ENCODE measurements at regions of chr1 and their contacts with region 1.

Region 1: DNA sequence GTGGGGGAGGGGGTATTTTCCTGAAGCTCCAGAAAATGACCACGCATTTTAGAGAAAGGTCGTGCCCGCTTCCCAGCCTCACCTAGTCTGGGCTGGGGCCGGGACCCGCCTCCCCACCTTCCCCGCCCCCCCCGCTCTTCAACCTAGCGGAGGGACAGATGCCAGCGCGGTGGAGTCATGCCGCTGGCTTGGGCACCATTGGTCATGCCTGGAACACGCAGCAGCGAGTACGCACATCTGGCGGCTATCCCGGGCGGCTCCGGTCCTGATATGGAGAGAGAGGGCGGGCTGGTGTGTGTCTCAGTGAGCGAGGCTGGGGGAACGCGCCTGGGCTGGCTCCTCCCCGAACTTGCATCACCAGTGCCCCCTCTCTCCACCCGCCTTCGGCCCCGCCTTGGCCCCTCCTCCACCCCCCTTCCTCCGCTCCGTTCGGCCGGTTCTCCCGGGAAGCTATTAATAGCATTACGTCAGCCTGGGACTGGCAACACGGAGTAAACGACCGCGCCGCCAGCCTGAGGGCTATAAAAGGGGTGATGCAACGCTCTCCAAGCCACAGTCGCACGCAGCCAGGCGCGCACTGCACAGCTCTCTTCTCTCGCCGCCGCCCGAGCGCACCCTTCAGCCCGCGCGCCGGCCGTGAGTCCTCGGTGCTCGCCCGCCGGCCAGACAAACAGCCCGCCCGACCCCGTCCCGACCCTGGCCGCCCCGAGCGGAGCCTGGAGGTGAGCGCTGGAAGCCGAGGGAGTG is at the start of gene ATF3:
- DNase-seq: peak; percentile 27 to 90 (median 47)
- ATAC-seq: peak; percentile 87
- H3K4me3 ChIP-seq: peak within 1 kb of the TSS; percentile 70
- H3K4me3 Mint-ChIP-seq: peak within 1 kb of the TSS; percentile 90 to 98 (median 95)
- H3K27ac ChIP-seq: no peak within 1 kb of the TSS
- H3K27ac Mint-ChIP-seq: peak within 1 kb of the TSS; percentile 40 to 98 (median 76)
- H3K4me1 ChIP-seq: peaks cover 17 to 23% of the 10 kb centered on the region in 2 donors
- H3K4me1 Mint-ChIP-seq: peaks cover 17 to 55% (median 21%) of the 10 kb centered on the region in 7 donors
- H3K27me3 ChIP-seq: peaks cover 17 to 26% of the 10 kb centered on the region in 2 donors
- H3K27me3 Mint-ChIP-seq: peaks cover 47 to 66% (median 58%) of the 10 kb centered on the region in 5 donors
- total RNA-seq, gene ATF3: 0.57 to 83.4 (median 12.5) TPM

Region 2: GRCh38 chr1:212545941-212546635 is 62.3 kb before region 1 on chr1:
- CTCF ChIA-PET with region 1: no interaction called
- POLR2A ChIA-PET with region 1: no interaction called
- intact Hi-C with region 1: no loop called
- DNase-seq: no peak
- ATAC-seq: peak; percentile 50
- H3K4me3 ChIP-seq: no peak overlapping the region
- H3K4me3 Mint-ChIP-seq: no peak overlapping the region
- H3K27ac ChIP-seq: no peak overlapping the region
- H3K27ac Mint-ChIP-seq: no peak overlapping the region
- H3K4me1 ChIP-seq: no peaks in the 10 kb centered on the region
- H3K4me1 Mint-ChIP-seq: peaks cover 0 to 2% (median 0%) of the 10 kb centered on the region in 7 donors
- H3K27me3 ChIP-seq: no peaks in the 10 kb centered on the region
- H3K27me3 Mint-ChIP-seq: peaks cover 7 to 55% (median 18%) of the 10 kb centered on the region in 5 donors

Region 3: DNA sequence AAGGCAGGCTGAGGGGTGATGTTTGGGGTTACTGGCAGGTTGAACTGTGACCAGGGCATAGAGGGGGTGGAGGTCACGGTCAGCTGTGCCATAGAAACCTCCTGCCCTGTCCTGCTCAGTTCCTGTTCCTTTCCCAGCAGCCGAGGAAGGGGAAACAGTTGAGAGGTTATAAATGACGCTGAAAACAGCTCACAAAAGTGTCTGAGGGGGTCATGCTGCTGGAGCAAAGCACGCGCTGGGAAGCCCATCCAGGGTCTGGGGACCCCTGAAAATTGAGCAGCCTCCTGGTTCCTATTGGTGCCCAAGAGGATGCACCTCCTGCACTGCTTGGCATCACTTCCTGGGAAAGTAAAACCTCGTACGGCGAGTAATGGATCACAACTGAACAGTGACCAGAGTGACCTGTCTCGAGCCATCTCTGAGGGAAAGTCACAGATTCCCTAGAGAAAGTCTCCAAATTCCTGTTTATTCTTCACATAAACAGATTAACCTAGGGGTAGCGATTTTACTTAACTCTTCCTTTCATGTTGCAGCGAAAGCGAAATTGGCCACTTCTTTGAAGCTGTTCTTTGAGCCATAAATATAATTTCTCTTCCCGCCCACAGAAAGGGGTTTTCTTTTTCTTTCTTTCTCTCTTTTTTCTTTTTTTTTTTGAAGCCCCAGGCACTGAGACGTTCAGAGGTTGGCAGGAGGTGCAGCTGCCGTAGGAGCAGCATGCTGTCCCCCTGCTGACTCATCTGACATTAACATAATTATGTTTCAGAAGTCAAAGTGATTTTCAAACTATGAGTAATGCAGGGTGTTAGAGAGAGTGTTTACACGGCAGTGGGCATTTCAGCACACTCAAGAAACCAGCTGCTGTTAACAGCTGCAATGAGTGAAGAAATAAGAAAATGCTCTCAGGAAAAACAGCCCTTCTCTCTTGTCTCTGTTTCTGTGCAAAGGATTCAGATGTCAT is 41.6 kb before region 1 on chr1:
- CTCF ChIA-PET with region 1: no interaction called
- POLR2A ChIA-PET with region 1: no interaction called
- intact Hi-C with region 1: loop called (anchors 1 kb)
- DNase-seq: peak in 7 of 9 donors; percentile 23 to 66 (median 30)
- ATAC-seq: peak; percentile 96
- H3K4me3 ChIP-seq: peak overlapping the region; percentile 78
- H3K4me3 Mint-ChIP-seq: peak overlapping the region; percentile 80 to 98 (median 88)
- H3K27ac ChIP-seq: peak overlapping the region; percentile 31
- H3K27ac Mint-ChIP-seq: peak overlapping the region; percentile 62 to 90 (median 77)
- H3K4me1 ChIP-seq: peaks cover 0 to 6% of the 10 kb centered on the region in 2 donors
- H3K4me1 Mint-ChIP-seq: peaks cover 9 to 27% (median 15%) of the 10 kb centered on the region in 7 donors
- H3K27me3 ChIP-seq: no peaks in the 10 kb centered on the region
- H3K27me3 Mint-ChIP-seq: peaks cover 0 to 43% (median 0%) of the 10 kb centered on the region in 5 donors

Region 4: DNA sequence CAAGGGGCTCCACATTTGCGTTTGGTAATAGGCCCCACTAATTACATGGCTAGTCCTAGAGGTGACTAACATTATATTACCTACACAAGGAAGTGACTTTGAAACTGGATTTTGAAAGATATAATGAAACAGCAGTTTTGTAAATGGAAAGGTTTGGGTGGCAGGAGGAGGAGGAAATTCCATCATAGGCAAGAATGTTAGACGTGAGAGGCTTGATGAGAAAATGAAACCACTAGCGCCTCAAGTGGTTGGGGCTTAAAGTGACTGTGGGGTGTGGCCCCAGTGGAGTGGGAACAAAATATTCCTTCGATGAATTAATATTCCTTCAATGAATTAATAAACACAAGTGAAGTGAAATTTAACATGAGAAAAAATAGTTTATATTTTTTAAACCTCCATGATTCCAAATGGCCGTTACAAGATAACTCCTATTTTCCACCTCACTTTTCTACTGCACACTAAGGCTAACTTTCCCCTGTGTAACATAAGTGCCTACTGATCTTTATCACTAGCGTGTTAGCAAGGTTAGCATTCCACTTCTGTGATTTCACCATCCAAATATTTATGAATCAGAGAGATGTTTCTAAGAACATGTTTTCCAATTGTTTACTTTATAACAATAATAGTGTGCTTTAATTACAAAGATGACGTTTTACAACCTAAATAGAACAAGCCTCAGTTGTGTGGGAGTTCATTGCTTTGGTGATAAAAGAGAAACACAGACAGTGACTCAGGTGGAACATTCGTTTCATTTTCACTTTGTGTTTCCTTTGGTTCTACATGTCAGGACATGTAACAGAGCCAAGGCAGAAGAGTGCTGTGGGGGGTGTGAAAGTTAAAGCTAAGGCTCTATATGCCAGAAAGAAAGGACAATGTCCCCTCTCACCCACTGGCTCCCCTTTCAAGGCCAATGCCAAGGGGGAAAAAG is 12.3 kb before region 1 on chr1:
- CTCF ChIA-PET with region 1: no interaction called
- POLR2A ChIA-PET with region 1: no interaction called
- intact Hi-C with region 1: loop called (anchors 1 kb)
- DNase-seq: peak in 7 of 9 donors; percentile 28 to 78 (median 50)
- ATAC-seq: peak; percentile 94
- H3K4me3 ChIP-seq: peak overlapping the region; percentile 14
- H3K4me3 Mint-ChIP-seq: peak overlapping the region; percentile 4 to 84 (median 72)
- H3K27ac ChIP-seq: no peak overlapping the region
- H3K27ac Mint-ChIP-seq: peak overlapping the region; percentile 19 to 99 (median 79)
- H3K4me1 ChIP-seq: peaks cover 8 to 11% of the 10 kb centered on the region in 2 donors
- H3K4me1 Mint-ChIP-seq: peaks cover 0 to 27% (median 14%) of the 10 kb centered on the region in 7 donors
- H3K27me3 ChIP-seq: no peaks in the 10 kb centered on the region
- H3K27me3 Mint-ChIP-seq: peaks cover 8 to 19% (median 12%) of the 10 kb centered on the region in 5 donors

Region 5: DNA sequence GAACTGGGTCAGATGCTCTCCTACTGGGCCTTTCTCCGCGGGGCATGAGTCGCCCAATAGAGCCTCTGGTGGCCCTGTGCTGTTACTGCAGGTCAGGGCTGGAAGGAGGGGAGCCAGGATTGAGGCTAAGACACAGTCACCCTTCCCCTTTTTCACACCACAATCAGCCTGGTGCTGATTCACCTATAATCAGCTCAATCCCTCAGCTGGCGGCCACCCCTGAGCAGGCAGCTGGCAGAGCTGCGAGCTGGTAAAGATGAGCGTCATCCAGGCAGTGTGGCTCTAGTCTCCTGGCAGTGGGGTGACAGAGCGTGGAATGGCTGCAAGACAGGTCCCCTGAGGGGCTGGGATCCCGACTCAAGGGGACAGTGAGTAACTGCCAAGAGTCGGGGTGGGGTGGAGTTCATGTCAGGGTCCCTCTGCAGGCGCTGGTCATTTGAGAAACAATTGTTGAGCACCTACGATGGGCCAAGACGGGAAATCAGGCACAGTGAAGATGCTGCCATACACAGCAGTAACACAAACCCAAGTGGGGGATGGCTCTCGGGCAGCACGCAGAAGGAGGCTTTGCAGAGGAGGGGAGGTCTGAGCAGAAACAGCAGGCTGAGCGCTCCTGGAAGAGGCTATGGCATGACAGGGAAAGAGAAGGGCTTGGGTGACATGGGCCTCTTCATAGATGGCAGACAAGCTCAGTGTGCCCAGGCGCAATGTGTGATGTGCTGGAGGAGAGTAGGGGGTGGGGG is 21.9 kb after region 1 on chr1:
- CTCF ChIA-PET with region 1: no interaction called
- POLR2A ChIA-PET with region 1: interaction called, 3 read pairs
- intact Hi-C with region 1: loop called in 1 of 2 experiments (anchors 1 kb)
- DNase-seq: peak in 8 of 9 donors; percentile 26 to 59 (median 44)
- ATAC-seq: peak; percentile 97
- H3K4me3 ChIP-seq: no peak overlapping the region
- H3K4me3 Mint-ChIP-seq: no peak overlapping the region
- H3K27ac ChIP-seq: no peak overlapping the region
- H3K27ac Mint-ChIP-seq: no peak overlapping the region
- H3K4me1 ChIP-seq: peaks cover 0 to 2% of the 10 kb centered on the region in 2 donors
- H3K4me1 Mint-ChIP-seq: peaks cover 0 to 14% (median 5%) of the 10 kb centered on the region in 7 donors
- H3K27me3 ChIP-seq: no peaks in the 10 kb centered on the region
- H3K27me3 Mint-ChIP-seq: peaks cover 0 to 16% (median 6%) of the 10 kb centered on the region in 5 donors

Region 6: DNA sequence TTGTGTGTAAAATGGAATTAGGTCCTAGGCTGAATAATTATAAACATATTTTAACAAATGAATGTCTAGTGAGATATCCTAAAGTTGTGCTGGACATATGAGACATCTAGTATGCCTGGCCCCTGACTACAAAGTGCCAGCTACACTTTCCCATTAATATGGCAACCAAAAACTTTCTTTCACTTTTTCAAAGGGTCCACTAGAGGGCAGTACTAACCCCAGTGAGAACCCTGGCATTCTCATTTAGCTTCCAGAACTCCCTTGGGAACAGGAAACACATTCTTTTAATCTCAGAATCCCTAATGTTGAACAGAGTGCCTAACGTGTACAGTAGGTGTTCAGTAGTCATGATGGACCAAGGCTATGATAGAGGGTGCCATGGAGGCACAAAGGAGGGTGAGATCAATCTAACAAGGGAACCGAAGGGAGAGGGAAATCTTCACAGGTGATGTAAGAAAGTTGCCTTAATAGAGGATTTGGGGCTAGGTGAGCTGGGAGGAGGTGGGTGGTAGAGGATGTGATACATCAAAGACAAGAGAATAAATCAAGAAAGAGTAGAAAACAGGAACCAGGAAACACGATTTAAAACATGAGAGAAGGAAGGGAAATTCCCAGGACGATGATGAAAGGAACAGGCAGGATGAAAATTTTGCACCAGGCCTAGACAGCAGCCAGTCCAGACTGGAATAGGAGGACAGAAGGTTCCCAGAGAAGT is 141.6 kb after region 1 on chr1:
- CTCF ChIA-PET with region 1: no interaction called
- POLR2A ChIA-PET with region 1: no interaction called
- intact Hi-C with region 1: loop called in 1 of 2 experiments (anchors 5 kb)
- DNase-seq: peak in 6 of 9 donors; percentile 3 to 30 (median 14)
- ATAC-seq: peak; percentile 58
- H3K4me3 ChIP-seq: no peak overlapping the region
- H3K4me3 Mint-ChIP-seq: peak overlapping the region; percentile 1 to 69 (median 48)
- H3K27ac ChIP-seq: peak overlapping the region; percentile 56
- H3K27ac Mint-ChIP-seq: peak overlapping the region; percentile 1 to 92 (median 88)
- H3K4me1 ChIP-seq: peaks cover 5 to 36% of the 10 kb centered on the region in 2 donors
- H3K4me1 Mint-ChIP-seq: peaks cover 36 to 73% (median 62%) of the 10 kb centered on the region in 7 donors
- H3K27me3 ChIP-seq: no peaks in the 10 kb centered on the region
- H3K27me3 Mint-ChIP-seq: no peaks in the 10 kb centered on the region

Region 7: GRCh38 chr1:212782422-212783154 is 174.2 kb after region 1 on chr1:
- CTCF ChIA-PET with region 1: no interaction called
- POLR2A ChIA-PET with region 1: no interaction called
- intact Hi-C with region 1: loop called in 1 of 2 experiments (anchors 2 kb)
- DNase-seq: peak in 6 of 9 donors; percentile 4 to 45 (median 34)
- ATAC-seq: peak; percentile 73
- H3K4me3 ChIP-seq: no peak overlapping the region
- H3K4me3 Mint-ChIP-seq: no peak overlapping the region
- H3K27ac ChIP-seq: no peak overlapping the region
- H3K27ac Mint-ChIP-seq: peak overlapping the region in 1 of 9 donors; percentile 31
- H3K4me1 ChIP-seq: no peaks in the 10 kb centered on the region
- H3K4me1 Mint-ChIP-seq: peaks cover 0 to 18% (median 6%) of the 10 kb centered on the region in 7 donors
- H3K27me3 ChIP-seq: no peaks in the 10 kb centered on the region
- H3K27me3 Mint-ChIP-seq: no peaks in the 10 kb centered on the region

Region 8: GRCh38 chr1:212857992-212858460 is 249.6 kb after region 1 on chr1 and contains the start of gene FLVCR1:
- CTCF ChIA-PET with region 1: no interaction called
- POLR2A ChIA-PET with region 1: no interaction called
- intact Hi-C with region 1: loop called in 1 of 2 experiments (anchors 5 kb)
- DNase-seq: peak; percentile 74 to 96 (median 80)
- ATAC-seq: peak; percentile 99
- H3K4me3 ChIP-seq: peak within 1 kb of the TSS; percentile 72
- H3K4me3 Mint-ChIP-seq: peak within 1 kb of the TSS in 6 of 10 donors; percentile 95 to 97 (median 96)
- H3K27ac ChIP-seq: peak within 1 kb of the TSS; percentile 68
- H3K27ac Mint-ChIP-seq: peak within 1 kb of the TSS; percentile 77 to 96 (median 89)
- H3K4me1 ChIP-seq: peaks cover 9 to 16% of the 10 kb centered on the region in 2 donors
- H3K4me1 Mint-ChIP-seq: peaks cover 9 to 34% (median 21%) of the 10 kb centered on the region in 7 donors
- H3K27me3 ChIP-seq: no peaks in the 10 kb centered on the region
- H3K27me3 Mint-ChIP-seq: no peaks in the 10 kb centered on the region
- total RNA-seq, gene FLVCR1: 7.4 to 12.2 (median 8.2) TPM

Measured in naive thymus-derived CD4-positive, alpha-beta T cell (primary cell).